Heart right ventricle (tissue), 16 donors: ENCODE measurements at regions of chr6 and their contacts with region 1.

Region 1: DNA sequence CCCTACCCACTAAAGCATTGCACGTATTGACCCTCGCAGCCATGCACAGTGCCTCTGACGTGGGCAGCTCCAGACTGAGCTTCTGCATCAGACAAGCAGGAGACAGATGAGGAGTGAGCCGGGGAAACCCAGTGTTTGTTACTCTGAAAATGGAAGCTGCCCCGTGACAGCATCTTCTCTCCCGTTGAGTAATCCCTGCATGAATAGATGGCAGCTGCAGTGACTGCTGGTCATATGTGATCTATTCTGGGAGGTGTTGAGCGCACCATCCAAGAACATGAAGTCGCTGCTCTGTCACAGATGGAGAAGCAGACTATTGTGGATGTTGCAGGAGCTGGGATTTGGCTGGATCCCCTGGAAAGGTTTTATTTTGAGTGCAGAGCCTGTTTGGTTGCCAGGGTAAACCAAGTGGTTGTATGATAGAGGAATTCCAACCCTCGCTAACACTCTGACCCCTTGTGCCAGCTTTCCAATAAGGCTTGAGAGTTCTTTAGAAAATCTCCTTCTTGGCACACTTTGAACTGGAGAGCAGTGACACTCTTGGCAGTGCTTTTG is 242.2 kb downstream of the NRN1 start:
- DNase-seq: peak in 1 of 2 donors; percentile 80
- ATAC-seq: peak; percentile 86 to 93 (median 90)
- H3K4me3 ChIP-seq: peak overlapping the region in 4 of 10 donors; percentile 12 to 32 (median 14)
- H3K27ac ChIP-seq: peak overlapping the region; percentile 33 to 92 (median 86)
- H3K4me1 ChIP-seq: peaks cover 9 to 52% (median 37%) of the 10 kb centered on the region in 9 donors
- H3K27me3 ChIP-seq: no peaks in the 10 kb centered on the region
- CTCF ChIP-seq: peak in 2 of 9 donors; percentile 21 to 28

Region 2: DNA sequence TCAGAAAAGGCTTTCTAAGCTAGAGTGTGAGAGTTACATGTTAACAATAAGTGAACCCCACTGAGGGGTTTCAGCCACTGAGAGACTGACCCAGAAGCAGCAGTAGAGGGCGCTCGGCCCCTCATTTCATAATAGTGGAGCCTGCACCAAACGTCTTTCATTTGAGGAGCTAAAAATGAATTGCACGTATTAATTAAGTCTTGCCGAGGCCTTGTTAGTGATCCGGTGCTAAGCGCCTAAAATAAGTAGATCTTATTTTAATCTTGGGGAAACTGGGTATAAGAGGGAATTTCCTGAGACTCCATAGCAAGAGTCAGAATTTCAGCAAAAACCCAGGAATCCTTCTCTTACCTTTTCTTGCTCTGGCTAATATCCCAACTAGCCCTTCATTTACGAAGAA is 293.4 kb before region 1 on chr6:
- intact Hi-C with region 1: loop called in 8 of 10 experiments (anchors 1 to 10 kb)
- DNase-seq: peak; percentile 48 to 59
- ATAC-seq: peak; percentile 70 to 91 (median 86)
- H3K4me3 ChIP-seq: peak overlapping the region in 1 of 10 donors; percentile 18
- H3K27ac ChIP-seq: no peak overlapping the region
- H3K4me1 ChIP-seq: peaks cover 0 to 19% (median 6%) of the 10 kb centered on the region in 9 donors
- H3K27me3 ChIP-seq: no peaks in the 10 kb centered on the region
- CTCF ChIP-seq: peak; percentile 58 to 95 (median 88)

Region 3: DNA sequence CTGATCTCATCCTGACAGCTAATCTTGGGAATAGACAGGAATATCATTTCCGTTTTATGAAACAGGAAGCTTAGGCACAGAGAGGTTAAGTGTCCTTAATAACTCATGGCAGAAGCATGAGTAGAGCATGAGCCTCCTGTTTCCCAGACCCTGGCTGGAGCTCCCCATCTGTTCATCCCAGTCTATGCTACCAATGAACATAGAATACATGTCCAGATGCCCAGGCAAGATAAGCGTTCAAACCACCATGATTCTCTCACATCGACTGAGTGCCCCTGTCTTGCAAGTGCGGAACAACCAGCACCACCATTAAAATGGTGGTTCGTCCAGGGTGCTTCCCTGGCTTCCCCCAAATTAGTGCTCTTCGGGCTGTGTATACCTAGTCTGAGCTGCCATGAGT is 286.1 kb before region 1 on chr6:
- intact Hi-C with region 1: loop called in 4 of 10 experiments (anchors 5 to 10 kb)
- DNase-seq: no peak
- ATAC-seq: no peak
- H3K4me3 ChIP-seq: no peak overlapping the region
- H3K27ac ChIP-seq: no peak overlapping the region
- H3K4me1 ChIP-seq: peaks cover 0 to 16% (median 0%) of the 10 kb centered on the region in 9 donors
- H3K27me3 ChIP-seq: no peaks in the 10 kb centered on the region
- CTCF ChIP-seq: no peak

Region 4: GRCh38 chr6:5507131-5507681 is 257.3 kb before region 1 on chr6:
- intact Hi-C with region 1: loop called in 3 of 10 experiments (anchors 10 kb)
- DNase-seq: no peak
- ATAC-seq: no peak
- H3K4me3 ChIP-seq: no peak overlapping the region
- H3K27ac ChIP-seq: no peak overlapping the region
- H3K4me1 ChIP-seq: peaks cover 0 to 8% (median 0%) of the 10 kb centered on the region in 9 donors
- H3K27me3 ChIP-seq: no peaks in the 10 kb centered on the region
- CTCF ChIP-seq: no peak

Region 5: DNA sequence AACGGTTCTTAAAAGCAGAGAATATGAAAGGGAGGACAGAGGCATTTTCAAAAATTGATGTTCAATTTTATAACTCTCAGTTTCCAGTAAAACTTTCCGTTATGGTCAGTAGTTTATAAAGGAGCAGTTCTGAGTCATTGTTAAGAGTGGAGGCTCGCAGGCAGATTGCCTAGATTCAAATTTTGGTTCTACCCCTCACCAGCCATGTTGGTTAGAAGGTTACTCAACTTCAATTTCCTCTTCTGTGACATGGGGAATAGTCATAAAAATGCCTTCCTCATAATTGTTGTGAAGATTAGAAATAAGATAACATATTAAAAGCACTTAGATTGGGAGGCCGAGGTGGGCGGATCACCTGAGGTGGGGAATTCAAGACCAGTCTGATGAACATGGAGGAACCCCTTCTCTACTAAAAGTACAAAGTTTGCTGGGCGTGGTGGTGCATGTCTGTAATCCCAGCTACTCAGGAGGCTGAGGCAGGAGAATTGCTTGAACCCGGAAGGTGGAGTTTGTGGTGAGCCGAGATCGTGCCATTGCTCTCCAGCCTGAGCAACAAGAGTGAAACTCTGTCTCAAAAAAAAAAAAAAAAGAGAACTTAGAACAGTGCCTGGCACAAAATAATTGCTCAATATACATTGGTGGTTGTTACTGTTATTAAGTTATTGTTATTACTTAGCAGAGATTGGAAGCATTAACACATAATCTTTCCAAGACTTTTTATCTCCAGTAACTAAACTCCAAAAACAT is 106.6 kb before region 1 on chr6:
- intact Hi-C with region 1: loop called in 1 of 10 experiments (anchors 10 kb)
- DNase-seq: no peak
- ATAC-seq: no peak
- H3K4me3 ChIP-seq: no peak overlapping the region
- H3K27ac ChIP-seq: peak overlapping the region in 1 of 10 donors; percentile 77
- H3K4me1 ChIP-seq: peaks cover 0 to 10% (median 2%) of the 10 kb centered on the region in 9 donors
- H3K27me3 ChIP-seq: no peaks in the 10 kb centered on the region
- CTCF ChIP-seq: no peak

Region 6: DNA sequence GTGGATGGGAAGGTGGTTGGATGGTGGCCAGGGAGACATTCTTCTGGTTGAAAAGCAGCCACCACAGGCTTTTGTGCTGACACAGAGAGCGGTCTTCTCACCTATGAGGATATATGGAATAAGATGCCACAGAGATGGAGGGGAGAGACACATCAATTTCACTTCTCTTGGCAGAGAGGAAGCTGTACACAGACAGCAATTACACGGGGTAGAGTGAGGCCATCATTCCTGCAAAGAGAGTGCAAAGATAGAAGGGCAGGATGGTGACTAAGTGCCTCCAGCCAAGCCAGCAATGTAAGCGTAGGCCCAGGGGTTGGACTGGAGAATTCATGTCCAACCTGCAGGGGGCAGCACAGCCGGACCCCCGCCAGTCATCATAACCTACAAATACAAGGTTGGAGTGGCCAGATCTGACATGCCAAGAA is 185.9 kb after region 1 on chr6:
- intact Hi-C with region 1: no loop called
- DNase-seq: peak; percentile 19 to 25
- ATAC-seq: peak in 1 of 8 donors; percentile 61
- H3K4me3 ChIP-seq: no peak overlapping the region
- H3K27ac ChIP-seq: no peak overlapping the region
- H3K4me1 ChIP-seq: no peaks in the 10 kb centered on the region
- H3K27me3 ChIP-seq: peaks cover 0 to 9% (median 0%) of the 10 kb centered on the region in 7 donors
- CTCF ChIP-seq: peak; percentile 14 to 65 (median 52)